ENCODE measurements at regions of chr14 and their contacts with region 1.

Region 1: DNA sequence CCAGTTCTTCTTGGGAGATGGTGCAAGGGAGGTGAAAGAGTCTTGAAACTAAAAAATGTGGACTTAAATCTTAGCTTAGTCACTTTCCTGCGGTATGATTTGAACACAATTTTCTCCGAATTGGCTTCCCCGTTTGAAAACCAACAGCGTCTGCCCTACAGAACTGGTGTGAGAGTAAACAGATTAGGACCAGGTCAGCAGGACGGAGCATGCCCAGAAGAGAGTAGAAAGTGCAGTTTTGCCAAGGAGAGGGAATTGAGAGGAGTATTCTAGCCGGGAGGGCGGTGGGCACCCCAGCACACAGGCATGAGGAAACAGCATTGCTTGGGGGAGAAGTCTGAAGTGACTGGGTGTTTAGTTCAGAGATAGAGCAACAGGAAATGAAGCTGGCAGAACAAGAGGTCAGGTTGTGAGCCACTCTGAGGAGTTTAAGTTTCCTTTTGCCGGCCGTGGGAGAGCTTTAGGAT is 927.1 kb downstream of the VRK1 start:
- DNase-seq: peak; percentile 51
- H3K4me3 Mint-ChIP-seq: peak overlapping the region; percentile 61
- H3K27ac Mint-ChIP-seq: peak overlapping the region; percentile 94
- H3K4me1 Mint-ChIP-seq: peaks cover 57% of the 10 kb centered on the region
- H3K27me3 Mint-ChIP-seq: no peaks in the 10 kb centered on the region

Region 2: GRCh38 chr14:97707603-97708002 is 16.7 kb before region 1 on chr14:
- CTCF ChIA-PET with region 1: interaction called, 9 read pairs
- POLR2A ChIA-PET with region 1: interaction called, 67 read pairs
- DNase-seq: peak; percentile 65
- H3K4me3 Mint-ChIP-seq: peak overlapping the region; percentile 26
- H3K27ac Mint-ChIP-seq: peak overlapping the region; percentile 96
- H3K4me1 Mint-ChIP-seq: peaks cover 90% of the 10 kb centered on the region
- H3K27me3 Mint-ChIP-seq: no peaks in the 10 kb centered on the region

Region 3: GRCh38 chr14:97883832-97884231 is 159.5 kb after region 1 on chr14:
- CTCF ChIA-PET with region 1: no interaction called
- POLR2A ChIA-PET with region 1: no interaction called
- DNase-seq: no peak
- H3K4me3 Mint-ChIP-seq: no peak overlapping the region
- H3K27ac Mint-ChIP-seq: no peak overlapping the region
- H3K4me1 Mint-ChIP-seq: peaks cover 8% of the 10 kb centered on the region
- H3K27me3 Mint-ChIP-seq: no peaks in the 10 kb centered on the region

Measured in activated CD4-positive, alpha-beta memory T cell treated with anti-CD3 and anti-CD28 coated beads, Interleukin-2, amount 10 ng/mL, durations not matched to agents 7 days and 5 days (primary cell).